Activated naive CD4-positive, alpha-beta T cell treated with anti-CD3 and anti-CD28 coated beads for 36 hours (primary cell): ENCODE measurements at regions of chr7 and their contacts with region 1.

Region 1: DNA sequence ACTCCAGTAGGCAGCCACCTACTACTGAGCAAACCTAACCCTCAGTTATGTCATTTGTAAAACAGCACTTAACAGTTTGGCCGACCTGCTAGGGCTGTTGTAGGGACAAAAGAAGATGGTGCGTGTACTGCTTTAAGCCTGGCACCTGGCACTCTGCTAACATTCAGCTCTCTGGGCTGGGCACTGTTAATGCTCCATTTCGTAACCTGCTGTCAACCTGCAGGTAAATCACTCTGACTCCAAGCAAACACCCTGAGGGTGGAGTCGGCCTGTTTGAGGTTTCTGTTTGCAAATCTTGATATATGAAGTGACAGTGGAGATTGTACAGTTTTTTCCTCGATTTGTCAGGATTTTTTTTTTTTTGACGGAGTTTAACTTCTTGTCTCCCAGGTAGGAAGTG is 7.3 kb downstream of the ZKSCAN1 start:
- DNase-seq: no peak
- H3K4me3 Mint-ChIP-seq: no peak overlapping the region
- H3K27ac Mint-ChIP-seq: peak overlapping the region; percentile 87
- H3K4me1 Mint-ChIP-seq: peaks cover 67% of the 10 kb centered on the region
- H3K27me3 Mint-ChIP-seq: no peaks in the 10 kb centered on the region

Region 2: GRCh38 chr7:99380032-99380822 is 642.4 kb before region 1 on chr7:
- CTCF ChIA-PET with region 1: no interaction called
- intact Hi-C with region 1: loop called (anchors 2 kb)
- DNase-seq: peak; percentile 69
- H3K4me3 Mint-ChIP-seq: peak overlapping the region; percentile 81
- H3K27ac Mint-ChIP-seq: peak overlapping the region; percentile 97
- H3K4me1 Mint-ChIP-seq: peaks cover 61% of the 10 kb centered on the region
- H3K27me3 Mint-ChIP-seq: no peaks in the 10 kb centered on the region

Region 3: GRCh38 chr7:99472561-99473243 is 550.0 kb before region 1 on chr7 and contains the start of gene ZNF789:
- CTCF ChIA-PET with region 1: no interaction called
- intact Hi-C with region 1: no loop called
- DNase-seq: peak; percentile 99
- H3K4me3 Mint-ChIP-seq: peak within 1 kb of the TSS; percentile 95
- H3K27ac Mint-ChIP-seq: peak within 1 kb of the TSS; percentile 83
- H3K4me1 Mint-ChIP-seq: peaks cover 32% of the 10 kb centered on the region
- H3K27me3 Mint-ChIP-seq: no peaks in the 10 kb centered on the region
- total RNA-seq, gene ZNF789: 8.0 to 9.8 TPM

Region 4: DNA sequence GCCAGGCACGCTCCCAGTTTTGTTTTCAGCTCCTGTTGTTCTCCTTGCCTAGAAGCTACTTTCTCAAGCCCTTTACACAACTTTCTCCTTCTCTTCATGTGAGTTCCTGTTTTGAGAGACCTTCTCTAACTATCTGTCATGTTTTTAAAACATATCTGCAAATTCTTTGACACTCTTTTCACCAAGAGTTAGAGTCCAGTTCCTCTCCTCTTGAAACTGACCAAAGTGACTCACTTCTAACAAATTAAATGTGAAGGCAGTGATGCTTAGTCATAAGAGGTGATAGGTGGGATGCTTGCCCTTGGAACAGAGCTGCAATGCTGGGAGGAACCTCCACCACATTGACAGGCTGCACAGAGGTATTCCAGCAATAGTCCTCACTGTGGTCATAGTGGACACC is 380.6 kb before region 1 on chr7:
- CTCF ChIA-PET with region 1: no interaction called
- intact Hi-C with region 1: loop called (anchors 1 kb)
- DNase-seq: no peak
- H3K4me3 Mint-ChIP-seq: no peak overlapping the region
- H3K27ac Mint-ChIP-seq: peak overlapping the region; percentile 33
- H3K4me1 Mint-ChIP-seq: peaks cover 44% of the 10 kb centered on the region
- H3K27me3 Mint-ChIP-seq: no peaks in the 10 kb centered on the region

Region 5: DNA sequence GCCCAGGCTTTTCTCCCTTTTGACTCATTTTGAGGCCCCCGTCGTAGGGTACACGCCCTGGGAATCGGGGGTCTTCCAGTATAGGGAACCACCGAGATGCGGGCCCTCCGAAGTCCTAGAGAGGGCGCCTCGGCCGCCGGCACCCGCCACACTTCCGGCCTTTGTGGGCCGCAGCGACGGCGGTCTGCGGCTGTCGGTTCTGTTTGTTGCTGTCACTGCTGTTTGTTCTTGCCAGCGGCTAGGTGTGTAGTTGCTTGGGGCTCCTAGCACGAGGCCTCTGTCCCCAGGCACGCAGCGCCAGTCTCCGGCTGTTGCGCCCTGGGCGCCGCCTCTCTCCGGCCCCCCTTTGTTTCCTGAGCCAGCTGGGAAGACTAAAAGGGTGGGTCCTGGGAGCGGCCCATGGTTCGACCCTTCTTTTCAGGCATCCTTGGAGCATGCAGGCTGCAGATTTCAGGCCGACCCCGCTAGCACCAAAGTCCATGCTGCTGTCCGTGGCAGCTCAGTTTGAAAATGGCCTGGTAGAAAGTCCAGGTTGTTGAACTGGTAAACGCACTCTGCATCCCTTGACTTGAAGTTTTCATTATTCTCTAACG is 25.0 kb before region 1 on chr7:
- CTCF ChIA-PET with region 1: interaction called, 5 read pairs
- intact Hi-C with region 1: loop called (anchors 1 kb)
- DNase-seq: peak; percentile 78
- H3K4me3 Mint-ChIP-seq: peak overlapping the region; percentile 69
- H3K27ac Mint-ChIP-seq: peak overlapping the region; percentile 78
- H3K4me1 Mint-ChIP-seq: peaks cover 10% of the 10 kb centered on the region
- H3K27me3 Mint-ChIP-seq: no peaks in the 10 kb centered on the region

Region 6: GRCh38 chr7:100049441-100050311 is 27.0 kb after region 1 on chr7 and contains the start of gene ZSCAN21:
- CTCF ChIA-PET with region 1: interaction called, 3 read pairs
- intact Hi-C with region 1: loop called (anchors 2 kb)
- DNase-seq: peak; percentile 85
- H3K4me3 Mint-ChIP-seq: peak within 1 kb of the TSS; percentile 85
- H3K27ac Mint-ChIP-seq: peak within 1 kb of the TSS; percentile 91
- H3K4me1 Mint-ChIP-seq: peaks cover 17% of the 10 kb centered on the region
- H3K27me3 Mint-ChIP-seq: no peaks in the 10 kb centered on the region
- total RNA-seq, gene ZSCAN21: 6.2 to 6.4 TPM

Region 7: DNA sequence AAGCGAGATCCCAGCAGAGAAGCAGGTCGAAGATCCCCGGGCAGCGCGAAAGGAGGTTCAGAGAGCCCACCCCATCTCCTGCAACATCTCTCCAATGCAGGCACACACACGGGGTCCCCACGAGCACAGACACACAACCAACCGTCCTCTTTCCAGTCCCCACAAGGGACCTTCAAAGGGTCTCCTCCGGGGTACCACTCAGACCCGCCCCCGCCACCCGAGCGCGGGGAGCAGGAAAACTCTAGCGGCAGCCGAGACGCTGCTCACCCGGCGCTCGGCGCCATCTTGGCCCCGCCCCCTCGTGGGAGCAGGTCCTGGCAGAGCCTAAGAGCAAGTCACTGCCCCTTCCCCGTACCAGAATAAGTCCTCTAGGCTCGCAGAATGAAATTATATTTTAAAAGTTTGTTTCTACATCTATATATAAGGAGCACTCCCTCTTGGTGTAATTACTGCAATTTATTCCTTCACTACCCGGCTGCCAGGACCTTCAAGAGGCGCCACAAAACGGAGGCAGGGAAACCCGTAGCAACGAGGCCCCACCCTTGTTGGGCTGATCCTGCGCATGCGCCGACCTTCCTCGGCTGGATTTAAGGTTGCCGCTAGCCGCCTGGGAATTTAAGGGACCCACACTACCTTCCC is 96.5 kb after region 1 on chr7 and contains the starts of genes CNPY4 and TAF6:
- CTCF ChIA-PET with region 1: no interaction called
- intact Hi-C with region 1: loop called (anchors 1 kb)
- DNase-seq: peak; percentile 96
- H3K4me3 Mint-ChIP-seq: peak within 1 kb of the TSS; percentile 93
- H3K27ac Mint-ChIP-seq: peak within 1 kb of the TSS; percentile 95
- H3K4me1 Mint-ChIP-seq: peaks cover 17% of the 10 kb centered on the region
- H3K27me3 Mint-ChIP-seq: no peaks in the 10 kb centered on the region
- total RNA-seq, gene CNPY4: 7.2 to 8.7 TPM
- total RNA-seq, gene TAF6: 48.9 to 53.5 TPM

Region 8: DNA sequence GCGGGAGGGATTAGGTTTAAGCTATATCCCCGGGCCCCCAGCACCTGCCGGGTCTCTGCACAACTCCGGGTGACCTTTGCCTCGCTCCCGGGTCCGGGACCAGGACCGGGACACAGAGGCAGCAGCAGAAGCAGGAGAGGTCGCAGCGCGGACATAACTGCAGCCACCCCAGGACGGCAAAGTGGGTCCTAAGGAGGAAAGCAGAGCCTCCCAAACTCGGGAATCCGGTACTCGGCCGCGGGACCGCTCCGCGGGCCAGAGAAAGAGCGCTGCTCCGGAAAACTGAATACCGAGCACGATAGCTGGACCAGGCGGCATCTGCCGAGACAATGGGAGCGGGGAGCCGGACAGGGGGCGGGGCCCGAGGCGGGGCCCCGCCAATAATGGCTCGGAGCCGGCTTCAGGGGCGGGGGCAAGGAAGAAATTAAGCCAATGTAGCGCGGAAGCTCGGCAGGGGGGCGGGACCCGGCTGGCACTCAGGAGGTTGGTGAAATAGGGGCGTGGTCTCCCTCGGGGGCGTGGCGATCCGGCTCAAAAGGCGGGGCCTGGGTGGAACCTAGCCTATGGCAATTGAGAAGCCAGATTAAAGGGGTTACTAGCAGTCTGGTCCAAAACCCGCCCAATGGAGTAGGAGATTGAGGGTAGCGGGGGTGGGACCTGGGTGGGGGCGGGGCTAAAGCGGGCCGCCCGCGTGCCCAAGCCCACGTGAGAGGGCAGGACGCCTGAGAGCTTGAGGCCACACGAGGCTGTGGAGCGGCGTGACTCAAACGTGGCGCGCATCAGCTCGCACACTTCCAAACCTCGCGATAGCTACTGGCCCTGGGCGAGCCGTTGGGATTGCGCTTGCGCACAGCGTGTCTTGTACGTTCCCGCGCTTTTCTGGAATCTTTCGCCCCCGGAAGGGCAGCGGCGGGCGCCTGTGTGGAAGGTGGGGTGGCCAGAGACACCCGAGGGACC is 154.7 kb after region 1 on chr7 and contains the starts of genes GPC2 and STAG3:
- CTCF ChIA-PET with region 1: no interaction called
- intact Hi-C with region 1: no loop called
- DNase-seq: peak; percentile 99
- H3K4me3 Mint-ChIP-seq: peak within 1 kb of the TSS; percentile 80
- H3K27ac Mint-ChIP-seq: peak within 1 kb of the TSS; percentile 30
- H3K4me1 Mint-ChIP-seq: peaks cover 43% of the 10 kb centered on the region
- H3K27me3 Mint-ChIP-seq: no peaks in the 10 kb centered on the region
- total RNA-seq, gene GPC2: 7.6 to 9.5 TPM
- total RNA-seq, gene STAG3: 38.4 to 41.0 TPM